BJ (cell line): ENCODE measurements at regions of chr9 and their contacts with region 1.

Region 1: DNA sequence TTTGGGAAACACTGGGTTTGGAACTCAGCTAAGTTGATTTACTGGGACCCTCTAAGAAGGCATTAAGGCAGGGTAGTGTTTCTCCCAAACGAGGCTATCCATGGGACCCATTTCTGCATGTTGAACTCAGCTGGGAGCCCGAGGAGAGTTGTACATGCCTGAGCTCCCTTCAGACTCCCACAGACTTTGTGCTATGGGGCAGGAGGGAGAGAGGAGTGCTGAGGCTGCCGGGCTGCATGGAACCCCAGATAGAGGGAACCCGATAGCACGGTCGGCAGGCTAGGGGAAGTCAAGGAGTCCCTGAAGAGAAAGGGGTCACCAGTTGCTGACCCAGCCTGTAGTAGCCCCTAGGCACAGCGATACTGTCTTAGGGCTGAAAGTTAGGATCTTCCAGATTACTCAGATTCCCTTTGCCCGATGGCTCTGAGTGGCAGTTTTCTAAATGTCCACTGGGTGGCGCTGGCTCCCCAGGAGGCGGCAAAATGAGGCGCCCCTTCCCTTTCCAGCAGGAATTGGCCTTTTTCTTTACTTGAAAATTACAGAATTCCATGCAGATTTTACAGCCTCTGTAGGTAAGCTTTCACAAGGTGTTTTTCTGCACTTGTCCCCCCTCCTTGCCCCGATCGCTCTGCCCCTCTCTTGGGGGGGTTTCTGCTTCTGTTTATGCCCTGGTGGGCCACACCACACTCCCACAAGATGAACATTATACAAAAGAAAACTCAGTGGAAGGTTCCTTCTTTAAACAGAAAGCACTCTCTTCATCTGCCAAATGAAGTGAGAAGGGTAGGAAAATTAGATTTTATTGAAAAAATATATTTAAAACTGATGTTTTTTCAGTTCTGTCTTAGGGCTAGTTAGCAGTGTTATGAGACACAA is 17.8 kb downstream of the NANS start:
- DNase-seq: no peak
- H3K4me3 ChIP-seq: no peak overlapping the region
- H3K27me3 ChIP-seq: no peaks in the 10 kb centered on the region
- CTCF ChIP-seq: peak; percentile 93

Region 2: GRCh38 chr9:98062151-98062550 is 12.2 kb before region 1 on chr9:
- CTCF ChIA-PET with region 1: interaction called, 17 read pairs
- POLR2A ChIA-PET with region 1: no interaction called
- DNase-seq: no peak
- H3K4me3 ChIP-seq: no peak overlapping the region
- H3K27me3 ChIP-seq: no peaks in the 10 kb centered on the region
- CTCF ChIP-seq: no peak

Region 3: DNA sequence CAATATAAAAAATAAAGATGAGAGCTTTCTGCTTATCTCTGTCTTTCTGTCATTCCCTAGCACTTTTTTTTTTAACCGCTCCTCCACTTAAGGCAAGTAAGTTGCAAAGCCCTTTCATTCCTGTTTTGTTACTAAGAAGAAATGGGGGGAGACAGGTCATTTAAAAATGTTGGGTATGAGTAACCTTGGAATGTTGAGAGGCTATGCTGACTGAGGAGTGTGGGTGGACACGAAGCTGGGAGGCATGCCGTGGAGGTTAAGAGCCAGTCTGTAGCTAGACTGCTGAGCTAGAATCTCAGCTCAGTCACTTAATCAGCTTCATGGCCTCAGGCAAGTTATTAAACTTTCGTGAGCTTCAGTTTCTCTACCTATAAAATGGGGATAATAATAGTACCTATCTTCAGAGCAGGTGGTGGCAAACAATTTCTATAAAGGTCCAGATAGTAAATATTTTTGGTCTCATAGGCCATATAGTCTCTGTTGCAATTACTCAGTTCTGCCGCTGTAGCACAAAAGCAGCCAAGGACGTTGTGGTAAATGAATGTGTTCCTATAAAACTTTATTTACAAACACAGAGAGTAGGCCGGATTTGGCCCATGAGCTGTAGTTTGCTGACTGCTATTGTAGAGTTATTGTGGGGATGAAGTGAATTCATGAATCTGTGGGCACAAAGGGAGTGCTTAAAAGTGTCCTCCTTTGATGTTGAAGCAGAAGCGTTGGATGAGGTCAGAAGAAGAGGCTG is 414.4 kb after region 1 on chr9:
- CTCF ChIA-PET with region 1: no interaction called
- POLR2A ChIA-PET with region 1: no interaction called
- DNase-seq: peak; percentile 97
- H3K4me3 ChIP-seq: no peak overlapping the region
- H3K27me3 ChIP-seq: no peaks in the 10 kb centered on the region
- CTCF ChIP-seq: peak; percentile 9; the same call in 1 of the 2 replicates

Region 4: DNA sequence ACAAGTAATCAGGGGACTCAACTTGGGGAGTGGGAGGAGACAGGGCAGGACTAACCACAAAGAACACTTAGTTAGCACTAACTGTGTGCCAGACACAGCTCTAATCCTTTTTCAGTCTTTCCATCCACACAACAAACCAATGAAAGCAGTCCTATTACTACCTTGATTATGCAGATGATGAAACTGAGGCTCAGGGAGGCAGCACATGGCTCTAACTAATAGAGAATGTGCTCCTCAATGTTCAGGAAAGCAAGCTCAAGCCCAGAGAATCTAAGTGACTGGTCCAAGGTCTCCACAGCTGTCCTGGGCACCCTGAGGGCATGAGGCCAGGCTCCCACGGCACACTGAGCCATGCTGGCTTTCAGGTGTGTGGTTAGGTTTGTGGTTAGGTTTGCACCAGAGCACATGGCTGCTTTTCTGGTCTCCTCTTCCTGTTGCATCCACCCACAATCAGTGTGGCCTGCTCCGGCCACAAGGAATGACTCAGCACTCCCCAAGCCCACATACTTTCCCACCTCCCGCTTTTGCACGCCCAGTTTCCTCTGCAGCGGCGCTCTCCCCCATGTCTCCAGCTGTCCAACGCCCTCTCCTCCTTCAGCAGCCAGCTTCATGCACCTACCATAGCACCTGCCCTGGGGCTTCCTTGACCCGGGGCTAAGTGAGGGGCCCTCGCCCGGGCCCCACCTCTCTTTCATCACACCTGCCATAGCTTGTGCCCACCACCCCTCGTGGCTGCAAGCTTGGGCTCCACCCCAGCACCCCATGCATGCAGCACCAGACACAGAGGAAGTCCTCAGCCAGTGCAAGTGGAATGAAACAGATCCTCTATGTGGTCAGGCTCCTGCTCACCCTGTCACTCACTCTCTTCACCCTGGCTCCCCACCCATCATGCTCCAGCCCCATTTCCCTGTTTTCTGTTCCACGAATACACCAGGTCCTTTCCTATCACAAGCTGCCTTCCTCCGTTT is 501.3 kb after region 1 on chr9:
- CTCF ChIA-PET with region 1: no interaction called
- POLR2A ChIA-PET with region 1: no interaction called
- DNase-seq: no peak
- H3K4me3 ChIP-seq: no peak overlapping the region
- H3K27me3 ChIP-seq: peaks cover 2% of the 10 kb centered on the region
- CTCF ChIP-seq: no peak